Activated T-helper 1 cell treated with anti-CD3 and anti-CD28 coated beads, Interleukin-12 subunit alpha, Interleukin-12 subunit beta, Interleukin-2, Interleukin-4 antibody, amounts not matched to agents 30 ng/mL and 10 ng/mL and 1 ng/mL, durations not matched to agents 14 hours and 24 hours and 36 hours (primary cell): ENCODE measurements at regions of chr1 and their contacts with region 1.

Region 1: GRCh38 chr1:226634166-226634588 is 85.6 kb downstream of the STUM start:
- DNase-seq: peak; percentile 66
- H3K4me3 Mint-ChIP-seq: no peak overlapping the region
- H3K27ac Mint-ChIP-seq: peak overlapping the region; percentile 31
- H3K4me1 Mint-ChIP-seq: peaks cover 34% of the 10 kb centered on the region
- H3K27me3 Mint-ChIP-seq: no peaks in the 10 kb centered on the region

Region 2: GRCh38 chr1:226687426-226687825 is 53.2 kb after region 1 on chr1:
- intact Hi-C with region 1: loop called (anchors 1 kb)
- DNase-seq: no peak
- H3K4me3 Mint-ChIP-seq: peak overlapping the region; percentile 29
- H3K27ac Mint-ChIP-seq: peak overlapping the region; percentile 83
- H3K4me1 Mint-ChIP-seq: peaks cover 97% of the 10 kb centered on the region
- H3K27me3 Mint-ChIP-seq: no peaks in the 10 kb centered on the region

Region 3: DNA sequence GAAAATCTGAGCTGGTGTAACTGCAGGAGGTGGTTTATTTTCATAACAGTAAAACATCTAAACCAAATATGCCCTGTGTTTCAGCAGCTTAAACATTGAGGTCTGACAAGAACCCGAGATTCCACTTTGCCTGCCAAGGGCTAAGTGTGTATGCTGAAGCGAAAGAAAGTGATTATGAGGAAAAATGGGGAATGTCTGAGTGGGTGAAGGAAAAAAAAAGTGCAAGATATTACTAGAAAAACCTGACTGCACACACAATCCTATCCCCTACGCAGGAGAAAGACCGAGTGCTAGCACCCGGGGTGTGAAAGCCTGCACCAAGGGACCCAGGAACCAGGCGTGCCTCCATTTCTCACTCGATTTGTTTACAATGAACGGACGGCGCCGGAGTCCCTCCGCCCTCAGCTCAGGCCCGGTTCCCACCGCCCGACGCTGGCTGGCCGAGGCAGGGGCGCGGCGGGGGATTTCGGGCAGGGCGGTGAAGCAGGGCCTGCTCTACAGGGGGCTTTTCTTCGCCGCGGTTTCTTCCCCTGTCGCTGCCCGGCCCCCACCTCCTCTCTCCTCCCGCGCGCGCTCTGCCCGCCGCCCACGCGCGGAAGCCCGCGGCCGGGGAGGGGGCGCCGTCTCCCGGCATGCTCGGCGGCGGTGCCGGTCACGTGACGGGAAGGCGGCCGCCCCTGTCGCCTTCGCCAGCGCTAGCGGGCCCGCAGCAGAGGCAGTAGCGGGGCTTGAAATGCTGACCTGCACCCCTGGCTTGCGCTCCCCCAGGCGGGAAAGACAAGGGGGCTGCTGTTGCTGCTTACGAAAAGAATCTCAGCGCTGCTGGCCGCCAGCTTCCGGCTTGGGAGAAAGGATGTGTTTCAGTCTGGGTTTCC is 69.0 kb after region 1 on chr1:
- intact Hi-C with region 1: loop called (anchors 2 kb)
- DNase-seq: peak; percentile 81
- H3K4me3 Mint-ChIP-seq: peak overlapping the region; percentile 77
- H3K27ac Mint-ChIP-seq: peak overlapping the region; percentile 89
- H3K4me1 Mint-ChIP-seq: peaks cover 57% of the 10 kb centered on the region
- H3K27me3 Mint-ChIP-seq: no peaks in the 10 kb centered on the region

Region 4: DNA sequence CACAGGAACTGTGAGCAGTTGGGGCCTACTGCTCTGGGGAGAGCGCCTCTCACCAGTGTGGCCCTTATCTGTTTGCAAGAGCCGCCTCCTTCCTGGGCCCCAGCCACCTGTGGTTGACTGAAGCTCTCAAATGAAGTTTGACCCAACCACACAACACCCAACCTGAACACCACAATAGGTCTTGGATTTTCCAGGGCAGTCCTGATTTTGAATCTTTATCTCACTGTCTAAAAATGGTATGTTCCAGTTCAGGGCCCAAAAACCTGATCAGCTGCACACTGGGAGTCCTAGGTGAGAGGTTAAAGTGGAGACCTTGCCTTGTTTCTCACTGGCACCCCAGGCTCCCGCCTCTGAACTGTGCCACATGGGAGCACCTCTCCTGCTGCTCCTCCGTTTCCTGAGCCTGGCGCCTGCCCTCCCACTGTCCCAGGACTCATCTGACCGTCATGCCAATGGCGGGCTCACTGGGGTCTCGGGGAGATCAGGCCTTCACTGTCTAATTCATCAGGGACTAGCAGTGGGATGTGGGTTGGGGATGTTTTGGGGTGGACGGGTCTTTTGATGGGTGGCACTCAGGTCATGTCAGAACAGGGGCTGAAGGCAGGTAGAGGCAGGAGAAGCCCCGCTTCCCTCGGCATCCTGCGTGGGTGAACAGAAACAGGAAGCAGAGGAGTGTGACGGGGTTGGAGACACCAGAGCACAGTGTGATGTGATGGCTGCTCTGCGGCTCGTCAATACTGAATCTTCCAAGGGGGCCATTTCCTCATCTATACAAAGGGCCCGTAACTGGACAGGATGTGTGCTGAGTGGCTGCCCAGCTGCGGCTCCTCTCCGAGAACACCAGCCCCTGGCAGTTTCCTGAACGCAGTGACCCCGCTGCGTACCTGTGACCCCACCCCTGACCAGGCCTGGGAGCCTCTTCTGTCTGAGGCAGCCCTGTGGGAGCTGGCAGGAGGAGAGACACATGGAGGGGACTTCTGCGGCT is 164.5 kb after region 1 on chr1:
- intact Hi-C with region 1: loop called (anchors 1 kb)
- DNase-seq: peak; percentile 63
- H3K4me3 Mint-ChIP-seq: peak overlapping the region; percentile 68
- H3K27ac Mint-ChIP-seq: peak overlapping the region; percentile 88
- H3K4me1 Mint-ChIP-seq: peaks cover 26% of the 10 kb centered on the region
- H3K27me3 Mint-ChIP-seq: peaks cover 16% of the 10 kb centered on the region